Panc1 (cell line): ENCODE measurements at regions of chr3 and their contacts with region 1.

Region 1: DNA sequence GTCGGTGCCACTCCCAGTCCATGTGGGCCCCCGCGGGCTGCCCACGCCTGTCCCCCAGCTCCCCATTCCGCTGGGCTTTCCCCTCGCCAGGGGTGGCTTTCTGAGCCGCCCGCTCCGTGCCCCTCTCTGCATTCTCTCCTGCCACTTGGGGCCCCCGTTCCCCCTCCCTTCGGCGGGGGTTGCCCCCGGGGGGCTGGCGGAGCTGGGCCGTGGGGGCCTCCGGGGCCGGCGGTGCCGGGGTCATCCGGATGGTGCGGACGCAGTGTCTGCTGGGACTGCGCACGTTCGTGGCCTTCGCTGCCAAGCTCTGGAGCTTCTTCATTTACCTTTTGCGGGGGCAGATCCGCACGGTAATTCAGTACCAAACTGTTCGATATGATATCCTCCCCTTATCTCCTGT is 46.5 kb downstream of the GRAMD1C start:
- DNase-seq: no peak
- ATAC-seq: no peak
- H3K4me3 ChIP-seq: no peak overlapping the region
- H3K27ac ChIP-seq: no peak overlapping the region
- H3K4me1 ChIP-seq: no peaks in the 10 kb centered on the region
- H3K27me3 ChIP-seq: no peaks in the 10 kb centered on the region
- CTCF ChIP-seq: no peak

Region 2: DNA sequence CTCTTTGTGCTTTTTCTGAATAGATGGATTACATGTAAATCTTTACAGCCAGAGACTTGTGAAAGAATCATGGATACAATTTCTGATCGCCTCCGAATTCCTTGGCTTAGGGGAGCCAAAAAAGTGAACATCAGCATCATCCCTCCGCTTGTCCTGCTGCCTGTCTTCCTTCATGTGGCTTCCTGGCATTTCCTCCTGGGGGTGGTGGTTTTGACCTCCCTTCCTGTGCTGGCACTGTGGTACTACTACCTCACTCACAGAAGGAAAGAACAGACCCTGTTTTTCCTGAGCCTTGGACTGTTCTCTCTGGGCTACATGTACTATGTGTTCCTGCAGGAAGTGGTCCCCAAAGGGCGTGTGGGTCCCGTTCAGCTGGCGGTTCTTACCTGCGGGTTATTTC is 68.6 kb after region 1 on chr3:
- CTCF ChIA-PET with region 1: no interaction called
- POLR2A ChIA-PET with region 1: no interaction called
- in situ Hi-C with region 1: no loop called
- intact Hi-C with region 1: no loop called
- DNase-seq: no peak
- ATAC-seq: no peak
- H3K4me3 ChIP-seq: no peak overlapping the region
- H3K27ac ChIP-seq: no peak overlapping the region
- H3K4me1 ChIP-seq: peaks cover 4% of the 10 kb centered on the region
- H3K27me3 ChIP-seq: no peaks in the 10 kb centered on the region
- CTCF ChIP-seq: no peak

Region 3: GRCh38 chr3:114928989-114929640 is 1044.1 kb after region 1 on chr3:
- CTCF ChIA-PET with region 1: no interaction called
- POLR2A ChIA-PET with region 1: interaction called, 11 read pairs
- in situ Hi-C with region 1: no loop called
- intact Hi-C with region 1: no loop called
- DNase-seq: no peak
- ATAC-seq: no peak
- H3K4me3 ChIP-seq: no peak overlapping the region
- H3K27ac ChIP-seq: no peak overlapping the region
- H3K4me1 ChIP-seq: no peaks in the 10 kb centered on the region
- H3K27me3 ChIP-seq: no peaks in the 10 kb centered on the region
- CTCF ChIP-seq: no peak